Activated CD4-positive, alpha-beta T cell treated with anti-CD3 and anti-CD28 coated beads for 36 hours (primary cell): ENCODE measurements at regions of chr4 and their contacts with region 1.

Region 1: DNA sequence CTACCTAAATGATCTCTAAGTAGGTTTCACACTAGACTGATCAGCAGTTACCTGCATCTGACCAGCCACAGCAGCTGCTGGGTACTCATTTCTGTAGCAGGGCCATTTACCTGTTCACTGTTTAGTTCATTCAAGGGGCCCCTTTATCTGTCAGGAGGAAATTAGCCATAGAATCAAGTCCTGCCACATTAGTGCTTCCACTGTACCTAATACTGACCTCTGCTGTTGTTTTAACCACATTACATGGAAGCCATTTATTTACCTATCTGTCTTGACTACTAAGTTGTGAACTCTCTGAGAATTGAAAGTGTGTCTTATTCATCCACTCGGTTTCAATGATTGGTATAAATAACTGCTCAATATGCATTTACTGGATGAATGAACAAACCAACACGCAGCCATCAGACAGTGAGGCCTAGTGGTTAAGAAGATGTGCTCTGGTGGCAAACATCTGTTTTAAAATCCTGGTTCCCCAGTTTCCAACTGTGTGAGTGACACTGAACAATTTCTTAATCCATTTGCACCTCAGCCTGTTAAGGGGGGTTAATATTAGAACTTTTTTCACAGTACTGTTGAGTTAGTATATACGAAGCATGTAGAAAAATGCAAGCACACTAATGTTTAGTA is 30.0 kb upstream of the ANXA5 start:
- DNase-seq: peak; percentile 30
- ATAC-seq: peak; percentile 91
- H3K4me3 Mint-ChIP-seq: no peak overlapping the region
- H3K27ac Mint-ChIP-seq: no peak overlapping the region
- H3K4me1 Mint-ChIP-seq: peaks cover 8% of the 10 kb centered on the region
- H3K27me3 Mint-ChIP-seq: peaks cover 4% of the 10 kb centered on the region

Region 2: DNA sequence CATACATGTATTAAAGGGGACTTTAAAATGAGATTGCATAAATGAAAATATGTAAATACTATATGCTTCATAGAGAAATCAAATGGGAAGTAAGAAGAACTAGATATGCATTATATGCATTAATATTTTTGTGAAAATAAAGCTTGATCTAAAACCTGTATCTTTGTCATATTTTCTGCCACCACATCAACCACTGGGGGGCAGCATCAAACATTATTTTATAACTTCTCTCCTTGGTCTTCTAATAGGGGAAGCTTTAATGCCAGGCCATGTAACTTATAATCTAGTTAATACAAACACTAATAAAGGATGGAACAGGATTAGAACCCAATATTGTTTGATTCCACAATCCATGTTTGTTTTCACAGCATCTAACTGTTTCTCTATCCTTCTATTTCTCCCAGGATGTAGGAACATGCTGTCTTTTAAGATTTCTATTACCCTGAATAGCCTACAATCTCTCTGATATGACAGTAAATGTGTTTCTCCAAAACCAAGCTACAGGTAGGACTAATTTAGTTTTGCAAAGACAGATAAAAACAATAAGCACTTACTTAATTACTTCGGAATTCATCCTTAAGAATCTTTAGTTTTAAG is 355.9 kb before region 1 on chr4:
- CTCF ChIA-PET with region 1: no interaction called
- POLR2A ChIA-PET with region 1: no interaction called
- intact Hi-C with region 1: loop called (anchors 1 kb)
- DNase-seq: peak; percentile 64
- ATAC-seq: no peak
- H3K4me3 Mint-ChIP-seq: no peak overlapping the region
- H3K27ac Mint-ChIP-seq: no peak overlapping the region
- H3K4me1 Mint-ChIP-seq: no peaks in the 10 kb centered on the region
- H3K27me3 Mint-ChIP-seq: peaks cover 20% of the 10 kb centered on the region

Region 3: GRCh38 chr4:121462660-121463261 is 264.0 kb before region 1 on chr4:
- CTCF ChIA-PET with region 1: interaction called, 4 read pairs
- POLR2A ChIA-PET with region 1: no interaction called
- intact Hi-C with region 1: loop called in 1 of 2 experiments (anchors 2 kb)
- DNase-seq: peak; percentile 38
- ATAC-seq: peak; percentile 47
- H3K4me3 Mint-ChIP-seq: no peak overlapping the region
- H3K27ac Mint-ChIP-seq: no peak overlapping the region
- H3K4me1 Mint-ChIP-seq: no peaks in the 10 kb centered on the region
- H3K27me3 Mint-ChIP-seq: peaks cover 3% of the 10 kb centered on the region

Region 4: GRCh38 chr4:121484633-121485032 is 242.1 kb before region 1 on chr4:
- CTCF ChIA-PET with region 1: no interaction called
- POLR2A ChIA-PET with region 1: no interaction called
- intact Hi-C with region 1: loop called (anchors 2 to 5 kb)
- DNase-seq: peak; percentile 18
- ATAC-seq: peak; percentile 66
- H3K4me3 Mint-ChIP-seq: no peak overlapping the region
- H3K27ac Mint-ChIP-seq: no peak overlapping the region
- H3K4me1 Mint-ChIP-seq: no peaks in the 10 kb centered on the region
- H3K27me3 Mint-ChIP-seq: peaks cover 9% of the 10 kb centered on the region

Region 5: GRCh38 chr4:121574618-121575017 is 152.1 kb before region 1 on chr4:
- CTCF ChIA-PET with region 1: no interaction called
- POLR2A ChIA-PET with region 1: no interaction called
- intact Hi-C with region 1: loop called in 1 of 2 experiments (anchors 5 kb)
- DNase-seq: no peak
- ATAC-seq: no peak
- H3K4me3 Mint-ChIP-seq: no peak overlapping the region
- H3K27ac Mint-ChIP-seq: no peak overlapping the region
- H3K4me1 Mint-ChIP-seq: no peaks in the 10 kb centered on the region
- H3K27me3 Mint-ChIP-seq: peaks cover 25% of the 10 kb centered on the region

Region 6: DNA sequence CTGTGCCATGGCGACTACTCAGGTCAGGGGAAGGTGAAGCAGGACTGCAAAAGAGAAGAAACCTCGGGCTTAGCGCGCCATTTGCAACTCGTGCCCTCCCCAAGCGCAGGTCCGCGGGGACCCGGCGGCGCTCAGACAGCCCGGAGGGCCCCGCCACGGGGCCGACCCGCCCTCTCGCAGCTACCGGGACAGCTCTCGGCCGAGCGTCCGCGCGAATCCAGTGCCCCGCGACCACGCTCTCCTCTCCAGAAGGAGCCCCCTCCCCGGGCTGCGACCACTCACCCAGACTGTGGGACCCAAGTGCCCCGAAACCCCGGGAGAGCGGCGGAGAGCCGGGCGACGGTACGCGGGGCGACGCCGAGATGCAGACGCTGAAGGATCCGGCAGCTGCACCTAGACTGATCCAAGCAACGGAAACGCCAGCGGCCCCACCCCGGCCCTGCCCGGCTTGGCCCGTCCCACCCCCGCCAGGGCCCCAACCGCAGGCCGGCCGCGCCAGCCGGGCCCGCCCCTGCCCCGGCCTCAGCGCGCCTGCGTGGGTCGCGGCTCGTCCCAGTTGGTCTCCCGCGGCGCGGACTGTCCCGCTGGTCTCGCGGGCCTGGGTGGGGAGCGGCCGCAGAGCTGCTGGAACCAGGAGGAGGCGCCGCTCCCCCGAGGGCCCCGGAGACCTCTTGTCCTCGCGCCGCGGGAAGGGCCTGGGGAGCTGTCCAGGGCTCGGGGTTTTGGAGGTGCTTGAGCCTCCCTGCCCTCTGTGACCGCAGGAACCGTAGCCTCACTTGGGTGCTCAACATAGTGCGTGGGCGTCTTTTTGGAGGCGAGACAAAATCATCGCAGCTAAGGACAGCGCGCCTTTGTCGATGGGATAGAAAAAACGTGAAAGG is 29.9 kb before region 1 on chr4 and contains the start of gene ANXA5:
- CTCF ChIA-PET with region 1: interaction called, 3 read pairs
- POLR2A ChIA-PET with region 1: interaction called, 4 read pairs
- intact Hi-C with region 1: loop called (anchors 2 kb)
- DNase-seq: peak; percentile 86
- ATAC-seq: peak; percentile 87
- H3K4me3 Mint-ChIP-seq: peak within 1 kb of the TSS; percentile 95
- H3K27ac Mint-ChIP-seq: peak within 1 kb of the TSS; percentile 99
- H3K4me1 Mint-ChIP-seq: peaks cover 41% of the 10 kb centered on the region
- H3K27me3 Mint-ChIP-seq: peaks cover 26% of the 10 kb centered on the region
- total RNA-seq, gene ANXA5: 105 to 117 TPM

Region 7: GRCh38 chr4:121711263-121712000 is 15.3 kb before region 1 on chr4:
- CTCF ChIA-PET with region 1: interaction called, 4 read pairs
- POLR2A ChIA-PET with region 1: no interaction called
- intact Hi-C with region 1: loop called (anchors 1 kb)
- DNase-seq: peak; percentile 74
- ATAC-seq: peak; percentile 40
- H3K4me3 Mint-ChIP-seq: no peak overlapping the region
- H3K27ac Mint-ChIP-seq: no peak overlapping the region
- H3K4me1 Mint-ChIP-seq: peaks cover 29% of the 10 kb centered on the region
- H3K27me3 Mint-ChIP-seq: peaks cover 40% of the 10 kb centered on the region